Activated T-helper 1 cell treated with anti-CD3 and anti-CD28 coated beads, Interleukin-12 subunit alpha, Interleukin-12 subunit beta, Interleukin-2, Interleukin-4 antibody, amounts not matched to agents 30 ng/mL and 10 ng/mL and 1 ng/mL, durations not matched to agents 14 hours and 24 hours and 36 hours (primary cell): ENCODE measurements at regions of chr5 and their contacts with region 1.

Region 1: GRCh38 chr5:157142317-157143126 is at the start of gene MED7:
- DNase-seq: peak; percentile 95
- H3K4me3 Mint-ChIP-seq: peak within 1 kb of the TSS; percentile 95
- H3K27ac Mint-ChIP-seq: peak within 1 kb of the TSS; percentile 99
- H3K4me1 Mint-ChIP-seq: peaks cover 42% of the 10 kb centered on the region
- H3K27me3 Mint-ChIP-seq: no peaks in the 10 kb centered on the region
- total RNA-seq, gene MED7: 15.0 and 15.5 TPM in 2 replicates

Region 2: DNA sequence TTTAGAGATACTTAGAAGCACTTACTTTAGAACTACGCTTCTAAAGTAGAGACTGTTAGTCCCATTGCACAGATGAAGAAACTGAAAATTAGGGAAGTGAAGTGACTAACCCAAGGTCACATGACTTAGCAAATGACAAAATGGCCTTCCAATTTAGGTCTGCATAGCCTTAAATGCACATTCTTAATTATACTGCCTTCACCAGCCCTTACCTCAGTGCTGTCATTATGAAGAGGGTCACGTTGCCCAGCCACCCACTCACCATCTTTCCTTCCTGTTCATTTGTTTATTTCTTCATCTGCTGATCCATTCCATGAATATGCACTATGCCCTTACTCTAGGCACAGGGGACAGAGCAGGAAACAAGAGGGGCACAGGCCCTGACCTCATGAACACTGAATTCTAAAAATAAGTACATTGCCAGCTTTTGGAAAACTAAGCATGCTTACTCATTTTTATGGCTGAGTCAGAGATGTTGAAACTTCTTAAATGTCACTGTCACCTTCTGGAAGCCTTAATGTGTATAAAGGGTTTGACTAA is 42.3 kb before region 1 on chr5:
- intact Hi-C with region 1: loop called (anchors 1 kb)
- DNase-seq: no peak
- H3K4me3 Mint-ChIP-seq: peak overlapping the region; percentile 54
- H3K27ac Mint-ChIP-seq: peak overlapping the region; percentile 95
- H3K4me1 Mint-ChIP-seq: peaks cover 50% of the 10 kb centered on the region
- H3K27me3 Mint-ChIP-seq: no peaks in the 10 kb centered on the region

Region 3: DNA sequence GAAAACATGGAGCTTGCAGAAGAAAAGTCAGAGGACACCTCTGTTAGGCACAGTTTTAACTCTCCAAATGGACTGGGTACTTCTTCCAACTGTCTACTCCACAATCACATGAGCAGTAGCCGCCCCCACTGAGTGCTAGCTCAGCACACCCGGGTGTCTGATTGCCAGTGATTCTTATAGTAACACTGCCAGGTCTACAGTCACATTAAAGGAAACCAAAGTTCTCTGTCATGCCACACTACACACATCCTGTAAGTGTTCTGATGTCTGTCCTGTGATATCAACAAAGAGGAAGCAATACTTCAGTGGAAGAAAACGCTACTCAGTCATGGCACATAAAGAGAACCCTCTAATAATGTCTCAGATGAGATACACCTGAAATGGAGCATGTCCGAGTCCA is 33.5 kb before region 1 on chr5 and contains the start of gene HAVCR2:
- intact Hi-C with region 1: loop called (anchors 1 kb)
- DNase-seq: peak; percentile 65
- H3K4me3 Mint-ChIP-seq: peak within 1 kb of the TSS; percentile 91
- H3K27ac Mint-ChIP-seq: peak within 1 kb of the TSS; percentile 94
- H3K4me1 Mint-ChIP-seq: peaks cover 63% of the 10 kb centered on the region
- H3K27me3 Mint-ChIP-seq: no peaks in the 10 kb centered on the region
- total RNA-seq, gene HAVCR2: 128 and 129 TPM in 2 replicates